Transverse colon (tissue), 4 donors: ENCODE measurements at regions of chr5 and their contacts with region 1.

Region 1: GRCh38 chr5:118653872-118654271 is 334.5 kb downstream of the DTWD2 start:
- DNase-seq: no peak
- H3K4me3 ChIP-seq: no peak overlapping the region
- H3K27ac ChIP-seq: no peak overlapping the region
- H3K4me1 ChIP-seq: no peaks in the 10 kb centered on the region
- H3K27me3 ChIP-seq: no peaks in the 10 kb centered on the region
- CTCF ChIP-seq: no peak
- EP300 ChIP-seq: no peak
- POLR2A ChIP-seq: no peak

Region 2: GRCh38 chr5:118606940-118607339 is 46.9 kb before region 1 on chr5:
- in situ Hi-C with region 1: no loop called
- intact Hi-C with region 1: loop called (anchors 1 kb)
- DNase-seq: no peak
- H3K4me3 ChIP-seq: no peak overlapping the region
- H3K27ac ChIP-seq: no peak overlapping the region
- H3K4me1 ChIP-seq: no peaks in the 10 kb centered on the region
- H3K27me3 ChIP-seq: no peaks in the 10 kb centered on the region
- CTCF ChIP-seq: no peak
- EP300 ChIP-seq: no peak
- POLR2A ChIP-seq: no peak